K562 (cell line): ENCODE measurements at regions of chr1 and their contacts with region 1.

Region 1: DNA sequence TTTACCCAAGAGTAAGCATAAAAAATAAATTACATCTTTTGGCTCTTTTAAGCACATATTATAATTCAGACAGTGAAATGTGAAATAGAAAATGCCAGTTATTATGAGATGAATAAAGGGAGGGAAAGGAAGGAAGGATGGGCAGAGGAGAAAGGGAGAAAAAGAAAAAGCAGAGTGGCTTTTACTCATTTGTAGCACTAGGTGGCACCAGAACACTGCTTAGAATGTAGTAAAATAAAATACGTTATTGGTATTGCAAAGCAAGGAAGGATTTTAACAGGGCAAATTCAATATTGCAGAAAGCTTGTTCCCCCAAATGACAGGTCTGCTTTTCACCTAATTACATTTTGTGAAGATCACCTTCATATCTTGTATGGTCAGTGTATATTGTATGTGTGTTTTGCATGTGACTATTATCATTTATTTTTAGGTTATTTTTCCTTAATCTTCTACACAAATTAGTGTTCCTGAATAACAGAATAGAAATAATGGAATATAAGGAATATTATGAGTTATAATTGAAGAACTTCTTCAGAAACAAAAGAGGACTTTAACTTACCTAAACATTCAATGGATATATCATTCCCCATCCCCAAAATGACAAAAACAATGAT is 9.1 kb upstream of the PCNX2 start:
- DNase-seq: peak; percentile 20 to 29 (median 26)
- ATAC-seq: peak; percentile 69
- H3K4me3 ChIP-seq: no peak overlapping the region
- H3K27ac ChIP-seq: no peak overlapping the region
- H3K4me1 ChIP-seq: no peaks in the 10 kb centered on the region
- H3K27me3 ChIP-seq: no peaks in the 10 kb centered on the region
- CTCF ChIP-seq: peak; percentile 45 to 82 (median 68); a peak in 5 of 6 replicates
- EP300 ChIP-seq: no peak
- POLR2A ChIP-seq: no peak
- RAD21 ChIP-seq: peak; percentile 74 to 85

Region 2: GRCh38 chr1:233364695-233365539 is 60.3 kb after region 1 on chr1:
- CTCF ChIA-PET with region 1: no interaction called
- POLR2A ChIA-PET with region 1: no interaction called
- in situ Hi-C with region 1: no loop called
- intact Hi-C with region 1: loop called (anchors 5 kb)
- DNase-seq: peak in 2 of 4 experiments; percentile 35 to 40
- ATAC-seq: 0 out of 3 replicates have a peak, but pooled peaks have one; percentile 46
- H3K4me3 ChIP-seq: no peak overlapping the region
- H3K27ac ChIP-seq: no peak overlapping the region
- H3K4me1 ChIP-seq: no peaks in the 10 kb centered on the region
- H3K27me3 ChIP-seq: peaks cover 9 to 15% of the 10 kb centered on the region in 2 experiments; a peak in 3 of 5 replicates
- CTCF ChIP-seq: peak; percentile 40 to 74 (median 50); a peak in 4 of 6 replicates
- EP300 ChIP-seq: no peak
- POLR2A ChIP-seq: no peak
- RAD21 ChIP-seq: peak; percentile 69 to 73

Region 3: GRCh38 chr1:234114648-234115307 is 810.2 kb after region 1 on chr1:
- CTCF ChIA-PET with region 1: no interaction called
- POLR2A ChIA-PET with region 1: no interaction called
- in situ Hi-C with region 1: no loop called
- intact Hi-C with region 1: loop called (anchors 5 kb)
- DNase-seq: peak; percentile 35 to 57 (median 41)
- ATAC-seq: peak; percentile 76
- H3K4me3 ChIP-seq: no peak overlapping the region
- H3K27ac ChIP-seq: no peak overlapping the region
- H3K4me1 ChIP-seq: 0 out of 5 replicates have a peak, but pooled peaks cover 0 to 3% of the 10 kb centered on the region in 2 experiments
- H3K27me3 ChIP-seq: peaks cover 7 to 22% of the 10 kb centered on the region in 2 experiments; a peak in 4 of 5 replicates
- CTCF ChIP-seq: peak; percentile 59 to 86 (median 75)
- EP300 ChIP-seq: no peak
- POLR2A ChIP-seq: no peak
- RAD21 ChIP-seq: peak; percentile 65 to 73